Activated naive CD4-positive, alpha-beta T cell treated with anti-CD3 and anti-CD28 coated beads for 36 hours (primary cell): ENCODE measurements at regions of chr4 and their contacts with region 1.

Region 1: GRCh38 chr4:1712216-1713002 is at the start of gene SLBP:
- DNase-seq: peak; percentile 99
- H3K4me3 Mint-ChIP-seq: peak within 1 kb of the TSS; percentile 98
- H3K27ac Mint-ChIP-seq: peak within 1 kb of the TSS; percentile 94
- H3K4me1 Mint-ChIP-seq: peaks cover 68% of the 10 kb centered on the region
- H3K27me3 Mint-ChIP-seq: no peaks in the 10 kb centered on the region
- total RNA-seq, gene SLBP: 75.4 to 77.1 TPM

Region 2: GRCh38 chr4:1579901-1580691 is 132.3 kb before region 1 on chr4:
- CTCF ChIA-PET with region 1: no interaction called
- intact Hi-C with region 1: loop called (anchors 5 kb)
- DNase-seq: peak; percentile 89
- H3K4me3 Mint-ChIP-seq: peak overlapping the region; percentile 64
- H3K27ac Mint-ChIP-seq: no peak overlapping the region
- H3K4me1 Mint-ChIP-seq: peaks cover 4% of the 10 kb centered on the region
- H3K27me3 Mint-ChIP-seq: no peaks in the 10 kb centered on the region

Region 3: GRCh38 chr4:1693129-1693896 is 19.1 kb before region 1 on chr4:
- CTCF ChIA-PET with region 1: interaction called, 77 read pairs
- intact Hi-C with region 1: loop called (anchors 1 kb)
- DNase-seq: peak; percentile 80
- H3K4me3 Mint-ChIP-seq: no peak overlapping the region
- H3K27ac Mint-ChIP-seq: peak overlapping the region; percentile 25
- H3K4me1 Mint-ChIP-seq: peaks cover 3% of the 10 kb centered on the region
- H3K27me3 Mint-ChIP-seq: no peaks in the 10 kb centered on the region

Region 4: DNA sequence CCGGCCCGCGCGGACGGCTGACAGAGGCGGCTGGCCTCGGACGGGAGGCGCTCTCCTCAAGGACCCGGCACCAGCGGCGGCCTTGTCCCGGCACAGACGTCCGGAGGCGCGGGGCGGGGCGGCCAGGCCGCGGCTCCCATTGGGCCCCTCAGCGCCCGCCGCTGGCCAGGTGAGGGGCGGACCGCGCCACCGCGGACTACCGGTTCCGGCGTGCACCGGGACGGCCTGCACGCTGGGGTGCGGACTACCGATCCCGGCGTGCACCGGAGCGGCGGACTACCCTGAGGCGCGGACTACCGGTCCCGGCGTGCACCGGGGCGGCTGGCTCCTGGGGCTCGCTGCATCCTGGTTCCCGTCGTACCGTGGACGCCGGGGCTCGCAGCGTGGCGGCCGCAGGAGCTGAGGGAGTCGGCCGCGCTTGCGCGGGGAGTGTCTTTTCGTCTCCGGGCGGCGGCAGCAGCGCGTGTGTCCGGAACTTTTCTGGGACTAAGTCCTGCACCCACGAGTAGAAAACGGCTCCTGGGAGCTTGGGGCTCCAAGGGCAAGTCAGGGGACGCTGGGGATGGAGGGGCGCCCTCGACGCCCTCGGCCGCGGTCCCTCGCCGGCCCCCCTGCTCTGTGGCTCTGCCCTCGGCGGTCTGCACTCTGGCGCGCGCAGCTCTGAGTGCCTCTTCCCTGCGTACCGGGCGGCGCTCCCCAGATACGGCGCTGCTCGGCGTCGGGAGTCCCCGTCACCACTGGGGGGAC is 143.8 kb after region 1 on chr4 and contains the start of gene LETM1:
- CTCF ChIA-PET with region 1: no interaction called
- intact Hi-C with region 1: loop called (anchors 1 kb)
- DNase-seq: peak; percentile 95
- H3K4me3 Mint-ChIP-seq: peak within 1 kb of the TSS; percentile 79
- H3K27ac Mint-ChIP-seq: no peak within 1 kb of the TSS
- H3K4me1 Mint-ChIP-seq: peaks cover 38% of the 10 kb centered on the region
- H3K27me3 Mint-ChIP-seq: no peaks in the 10 kb centered on the region
- total RNA-seq, gene LETM1: 36.3 to 40.5 TPM

Region 5: GRCh38 chr4:2262143-2262943 is 549.9 kb after region 1 on chr4:
- CTCF ChIA-PET with region 1: no interaction called
- intact Hi-C with region 1: loop called (anchors 2 kb)
- DNase-seq: peak; percentile 98
- H3K4me3 Mint-ChIP-seq: peak overlapping the region; percentile 69
- H3K27ac Mint-ChIP-seq: no peak overlapping the region
- H3K4me1 Mint-ChIP-seq: peaks cover 2% of the 10 kb centered on the region
- H3K27me3 Mint-ChIP-seq: no peaks in the 10 kb centered on the region